ENCODE measurements at regions of chr4 and their contacts with region 1.

Region 1: GRCh38 chr4:174764105-174764729 is 64.8 kb downstream of the GLRA3 start:
- DNase-seq: no peak
- ATAC-seq: no peak
- H3K4me3 ChIP-seq: no peak overlapping the region
- H3K27ac ChIP-seq: no peak overlapping the region
- H3K4me1 ChIP-seq: no peaks in the 10 kb centered on the region
- H3K27me3 ChIP-seq: no peaks in the 10 kb centered on the region

Region 2: DNA sequence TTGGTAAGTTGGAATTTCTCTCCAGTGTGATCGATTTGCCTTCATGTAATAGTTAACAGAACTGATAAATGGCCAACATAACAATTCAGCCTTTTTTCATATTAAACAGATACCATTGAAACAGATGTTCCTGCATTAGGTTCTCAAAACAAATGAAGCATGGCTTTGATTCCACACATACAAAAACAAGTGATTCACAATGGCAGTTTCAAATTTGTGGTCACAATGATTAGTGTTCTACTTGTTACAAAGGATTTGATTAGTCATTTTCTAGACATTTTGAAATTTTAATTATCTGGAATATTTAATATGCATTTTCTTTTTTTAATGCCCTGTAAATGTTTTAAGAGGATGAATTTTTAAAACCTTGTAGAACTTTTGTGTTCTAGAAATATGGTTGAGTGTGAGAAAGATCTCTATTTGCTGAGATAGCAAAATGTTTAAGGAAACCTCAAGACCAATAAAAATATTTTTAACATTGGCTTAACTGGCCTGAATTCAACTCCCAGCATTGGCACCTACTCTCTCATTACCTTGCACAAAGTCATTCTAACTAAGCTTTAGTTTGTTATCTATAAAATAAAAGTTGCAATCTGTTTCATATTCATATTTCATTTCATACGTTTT is 83.7 kb after region 1 on chr4:
- intact Hi-C with region 1: no loop called
- DNase-seq: no peak
- ATAC-seq: no peak
- H3K4me3 ChIP-seq: no peak overlapping the region
- H3K27ac ChIP-seq: no peak overlapping the region
- H3K4me1 ChIP-seq: no peaks in the 10 kb centered on the region
- H3K27me3 ChIP-seq: no peaks in the 10 kb centered on the region

Region 3: GRCh38 chr4:175536852-175537453 is 772.7 kb after region 1 on chr4:
- intact Hi-C with region 1: loop called in 3 of 4 experiments (anchors 5 to 10 kb)
- DNase-seq: no peak
- ATAC-seq: no peak
- H3K4me3 ChIP-seq: no peak overlapping the region
- H3K27ac ChIP-seq: no peak overlapping the region
- H3K4me1 ChIP-seq: no peaks in the 10 kb centered on the region
- H3K27me3 ChIP-seq: no peaks in the 10 kb centered on the region

Region 4: DNA sequence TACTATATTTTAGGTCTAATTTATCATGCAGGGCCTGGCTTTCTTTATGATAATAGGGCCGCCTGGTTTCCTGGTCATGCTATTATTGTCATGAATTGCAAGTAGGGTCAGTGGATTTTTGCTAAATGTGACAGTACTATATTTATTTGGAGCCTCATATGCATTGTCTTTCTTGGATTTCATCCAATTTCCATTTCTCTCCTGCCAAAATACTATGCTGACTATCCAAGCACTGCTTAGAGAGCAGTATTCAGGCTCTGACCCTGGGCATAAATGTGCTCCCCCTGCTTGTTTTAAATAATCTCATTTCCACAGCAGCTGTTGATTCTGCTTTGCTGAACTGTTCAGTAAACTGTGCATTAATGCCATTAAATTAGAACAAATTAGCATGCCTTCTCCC is 778.6 kb after region 1 on chr4:
- intact Hi-C with region 1: loop called in 3 of 4 experiments (anchors 5 to 10 kb)
- DNase-seq: no peak
- ATAC-seq: no peak
- H3K4me3 ChIP-seq: no peak overlapping the region
- H3K27ac ChIP-seq: no peak overlapping the region
- H3K4me1 ChIP-seq: no peaks in the 10 kb centered on the region
- H3K27me3 ChIP-seq: no peaks in the 10 kb centered on the region

Measured in right cardiac atrium (tissue), 5 donors.